ENCODE measurements at regions of chrX and their contacts with region 1.

Region 1: DNA sequence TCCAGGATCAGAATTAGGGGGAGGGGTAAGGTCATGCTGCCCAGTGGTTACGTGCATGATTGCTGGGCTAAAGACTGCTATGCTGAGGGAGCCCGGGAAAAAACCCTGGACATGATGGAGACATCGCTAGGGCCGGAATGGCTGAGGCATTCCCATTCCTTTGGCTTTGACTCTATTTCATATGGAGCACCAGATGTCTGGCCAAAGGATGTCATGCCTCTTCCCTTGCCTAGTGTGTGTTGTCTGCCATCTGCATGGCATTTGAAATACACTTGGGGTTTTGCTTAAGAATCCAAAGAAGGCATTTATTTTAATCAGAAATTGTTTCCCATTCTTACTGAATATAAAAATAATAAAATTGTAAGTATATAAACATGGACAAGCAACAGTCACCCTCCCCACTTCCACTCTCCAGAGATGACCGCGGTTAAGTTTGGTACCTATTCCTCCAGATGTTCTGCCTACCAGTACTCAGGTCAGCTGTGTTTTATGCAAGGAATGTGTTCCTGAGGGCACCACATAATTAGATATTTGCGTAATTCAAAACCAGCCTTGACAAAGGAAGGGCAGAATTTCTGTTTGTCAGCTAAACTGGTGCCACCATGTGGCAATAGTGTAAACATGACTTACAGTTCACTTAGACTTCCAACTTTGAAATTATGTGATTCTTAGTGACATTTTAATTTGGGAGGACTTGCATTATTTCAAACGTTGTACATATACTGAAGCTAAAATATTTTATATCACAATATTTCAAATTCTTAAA is 105.9 kb downstream of the CT47B1 start:
- DNase-seq: no peak
- H3K4me3 ChIP-seq: no peak overlapping the region
- H3K27ac ChIP-seq: peak overlapping the region; percentile 27
- H3K4me1 ChIP-seq: no peaks in the 10 kb centered on the region
- H3K27me3 ChIP-seq: no peaks in the 10 kb centered on the region
- CTCF ChIP-seq: peak; percentile 48

Region 2: GRCh38 chrX:119817130-119817690 is 952.5 kb before region 1 on chrX:
- intact Hi-C with region 1: no loop called
- DNase-seq: no peak
- H3K4me3 ChIP-seq: no peak overlapping the region
- H3K27ac ChIP-seq: no peak overlapping the region
- H3K4me1 ChIP-seq: no peaks in the 10 kb centered on the region
- H3K27me3 ChIP-seq: no peaks in the 10 kb centered on the region
- CTCF ChIP-seq: no peak

Region 3: GRCh38 chrX:120468825-120469525 is 300.8 kb before region 1 on chrX and contains the start of gene LAMP2:
- intact Hi-C with region 1: no loop called
- DNase-seq: peak; percentile 88
- H3K4me3 ChIP-seq: peak within 1 kb of the TSS; percentile 77
- H3K27ac ChIP-seq: peak within 1 kb of the TSS; percentile 92
- H3K4me1 ChIP-seq: peaks cover 34% of the 10 kb centered on the region
- H3K27me3 ChIP-seq: no peaks in the 10 kb centered on the region
- CTCF ChIP-seq: no peak
- total RNA-seq, gene LAMP2: 54.7 TPM

Region 4: DNA sequence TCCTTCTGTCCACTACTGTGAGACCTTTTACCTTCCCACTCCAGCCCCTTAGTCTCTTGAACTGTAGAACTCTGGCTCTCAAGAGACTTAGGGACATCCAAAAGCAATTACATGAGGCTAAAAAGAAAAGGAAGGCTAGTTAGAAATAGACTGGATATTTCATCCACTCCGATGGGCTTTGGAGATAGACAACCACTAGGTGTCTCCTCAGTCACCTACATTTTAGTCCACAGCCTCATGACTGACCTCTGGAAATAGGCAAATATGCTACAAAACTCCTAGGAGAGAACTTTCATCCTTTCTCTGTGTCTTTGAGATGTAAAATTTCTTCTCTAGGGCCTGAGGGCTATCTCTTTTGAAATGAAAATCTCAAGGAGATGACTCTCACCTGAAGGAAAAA is 255.5 kb before region 1 on chrX:
- intact Hi-C with region 1: loop called (anchors 5 kb)
- DNase-seq: no peak
- H3K4me3 ChIP-seq: no peak overlapping the region
- H3K27ac ChIP-seq: no peak overlapping the region
- H3K4me1 ChIP-seq: no peaks in the 10 kb centered on the region
- H3K27me3 ChIP-seq: no peaks in the 10 kb centered on the region
- CTCF ChIP-seq: peak; percentile 21

Region 5: DNA sequence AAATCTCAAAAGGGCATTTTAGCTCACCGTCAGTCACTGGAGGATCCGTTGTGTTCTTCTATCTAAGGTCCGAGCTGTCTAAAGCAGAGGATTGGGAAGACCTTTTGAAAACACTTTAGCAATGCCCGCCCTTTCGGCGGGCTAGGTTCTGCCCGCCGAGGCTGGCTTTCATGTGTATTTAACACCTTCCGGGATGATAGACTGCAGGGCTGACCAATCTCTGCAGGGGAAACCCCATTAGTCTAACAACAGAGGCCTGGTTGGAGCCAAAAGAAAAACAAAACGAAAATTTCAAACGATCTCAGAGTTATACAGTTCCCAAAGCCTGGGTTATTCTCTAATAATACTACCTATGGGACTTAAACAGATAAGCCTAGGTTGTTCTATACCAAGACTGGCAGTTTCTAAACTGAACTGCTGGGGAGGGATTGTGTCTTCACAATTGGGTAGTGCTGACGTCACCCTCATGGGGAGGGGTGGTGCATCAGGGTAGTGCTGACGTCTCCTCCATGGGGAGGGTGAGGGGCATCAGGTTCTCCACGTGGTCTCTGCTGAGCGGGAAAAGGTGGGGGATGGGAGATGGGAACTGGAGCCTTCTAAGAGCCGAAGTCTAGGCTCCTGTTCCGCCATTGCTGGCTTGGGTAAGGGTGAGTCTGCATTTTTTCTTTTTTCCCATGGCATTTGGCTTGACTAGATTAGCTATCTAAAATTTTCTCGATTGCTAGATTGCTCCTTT is 194.2 kb before region 1 on chrX:
- intact Hi-C with region 1: no loop called
- DNase-seq: no peak
- H3K4me3 ChIP-seq: no peak overlapping the region
- H3K27ac ChIP-seq: no peak overlapping the region
- H3K4me1 ChIP-seq: no peaks in the 10 kb centered on the region
- H3K27me3 ChIP-seq: no peaks in the 10 kb centered on the region
- CTCF ChIP-seq: no peak